ENCODE measurements at regions of chr12 and their contacts with region 1.

Region 1: GRCh38 chr12:109880016-109880931 is at the start of gene GLTP:
- DNase-seq: peak; percentile 86 to 95 (median 95)
- ATAC-seq: peak; percentile 97
- H3K4me3 ChIP-seq: peak within 1 kb of the TSS; percentile 66
- H3K27ac ChIP-seq: peak within 1 kb of the TSS; percentile 37
- H3K4me1 ChIP-seq: peaks cover 10% of the 10 kb centered on the region
- H3K27me3 ChIP-seq: no peaks in the 10 kb centered on the region
- total RNA-seq, gene GLTP: 20.5 to 26.8 (median 22.3) TPM

Region 2: GRCh38 chr12:109428037-109428629 is 452.1 kb before region 1 on chr12:
- intact Hi-C with region 1: loop called in 1 of 4 experiments (anchors 10 kb)
- DNase-seq: peak; percentile 80 to 93 (median 93)
- ATAC-seq: peak; percentile 87 to 89
- H3K4me3 ChIP-seq: no peak overlapping the region
- H3K27ac ChIP-seq: no peak overlapping the region
- H3K4me1 ChIP-seq: no peaks in the 10 kb centered on the region
- H3K27me3 ChIP-seq: no peaks in the 10 kb centered on the region

Region 3: GRCh38 chr12:109804820-109805761 is 75.2 kb before region 1 on chr12:
- intact Hi-C with region 1: loop called (anchors 2 to 10 kb)
- DNase-seq: peak; percentile 42 to 88 (median 86)
- ATAC-seq: peak; percentile 73 to 84
- H3K4me3 ChIP-seq: no peak overlapping the region
- H3K27ac ChIP-seq: no peak overlapping the region
- H3K4me1 ChIP-seq: no peaks in the 10 kb centered on the region
- H3K27me3 ChIP-seq: no peaks in the 10 kb centered on the region